Natural killer cell (primary cell): ENCODE measurements at regions of chr6 and their contacts with region 1.

Region 1: DNA sequence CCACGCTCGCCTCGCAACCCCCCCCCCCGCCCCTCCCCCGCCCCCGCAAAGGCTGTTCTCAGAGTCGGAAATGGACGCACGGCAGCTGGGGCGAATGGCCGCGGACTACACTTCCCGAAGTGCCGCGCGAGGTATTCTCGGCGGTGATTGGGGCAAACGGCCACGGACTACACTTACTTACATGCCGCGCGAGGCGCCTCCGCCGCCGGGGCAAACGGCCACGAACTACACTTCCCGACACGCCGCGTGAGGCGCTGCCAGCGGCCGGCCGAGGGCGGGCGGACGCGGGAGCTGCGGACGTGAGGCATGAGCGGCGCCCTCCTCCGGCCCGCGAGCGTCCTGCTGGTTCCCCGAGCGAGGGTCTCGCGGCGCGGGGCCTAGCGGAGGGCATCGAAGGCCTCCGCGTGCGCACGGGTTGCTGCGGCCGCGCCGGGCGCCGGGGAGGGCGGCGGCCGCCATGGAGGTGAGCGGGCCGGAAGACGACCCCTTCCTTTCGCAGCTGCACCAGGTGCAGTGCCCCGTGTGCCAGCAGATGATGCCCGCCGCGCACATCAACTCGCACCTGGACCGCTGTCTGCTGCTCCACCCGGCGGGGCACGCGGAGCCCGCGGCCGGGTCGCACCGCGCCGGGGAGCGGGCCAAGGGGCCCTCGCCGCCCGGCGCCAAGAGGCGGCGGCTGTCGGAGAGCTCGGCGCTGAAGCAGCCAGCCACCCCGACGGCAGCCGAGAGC is at the start of gene WRNIP1:
- DNase-seq: peak; percentile 94 to 98
- ATAC-seq: peak; percentile 85 to 96 (median 90)
- H3K4me3 ChIP-seq: peak within 1 kb of the TSS; percentile 85
- H3K4me3 Mint-ChIP-seq: peak within 1 kb of the TSS; percentile 94
- H3K27ac ChIP-seq: peak within 1 kb of the TSS; percentile 100
- H3K27ac Mint-ChIP-seq: peak within 1 kb of the TSS; percentile 96 to 98
- H3K4me1 ChIP-seq: peaks cover 25% of the 10 kb centered on the region
- H3K4me1 Mint-ChIP-seq: peaks cover 43 to 48% of the 10 kb centered on the region in 2 donors
- H3K27me3 ChIP-seq: no peaks in the 10 kb centered on the region
- H3K27me3 Mint-ChIP-seq: no peaks in the 10 kb centered on the region
- CTCF ChIP-seq: peak; percentile 50
- total RNA-seq, gene WRNIP1: 27.9 to 34.8 (median 30.5) TPM

Region 2: DNA sequence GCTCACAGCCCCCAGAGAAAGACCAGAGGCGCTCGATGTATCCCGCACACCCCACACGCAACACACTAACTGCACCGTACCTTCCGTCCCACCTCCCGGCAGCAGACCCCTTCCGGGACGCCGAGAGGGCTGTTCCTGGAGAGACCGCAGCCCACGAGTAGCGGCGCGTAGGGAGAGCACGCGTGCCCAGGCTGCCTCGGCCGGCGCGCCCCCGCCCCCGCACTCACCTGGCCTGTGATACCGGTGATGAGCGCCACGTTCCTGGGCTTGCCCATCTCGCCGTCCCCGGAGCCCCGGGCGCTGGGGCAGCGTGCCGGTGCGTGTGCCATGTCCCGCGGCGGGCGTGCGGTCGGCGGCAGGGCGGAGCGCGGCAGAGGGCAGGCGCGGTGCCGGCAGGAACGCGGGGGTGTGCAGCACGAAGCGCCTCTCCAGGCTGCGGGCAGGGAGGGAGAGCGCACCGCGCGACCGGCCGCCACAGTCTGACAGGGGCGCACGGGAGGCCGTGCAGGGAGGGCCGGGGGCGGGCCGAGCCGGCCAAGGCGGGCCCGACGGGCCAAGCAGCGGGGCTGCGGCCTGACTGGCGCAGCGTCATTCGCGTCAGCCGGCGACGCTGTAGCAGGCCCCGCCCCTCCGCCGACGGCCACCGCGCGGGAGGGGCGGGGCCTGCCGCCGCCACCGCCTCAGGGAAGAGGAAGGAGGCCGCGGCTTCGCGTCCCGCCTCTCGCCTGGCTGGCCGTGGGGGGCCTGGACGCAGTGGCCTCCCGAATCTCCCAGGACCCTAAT is 520.0 kb before region 1 on chr6 and contains the start of gene GMDS:
- intact Hi-C with region 1: loop called (anchors 10 kb)
- DNase-seq: peak; percentile 84 to 94
- ATAC-seq: peak; percentile 95 to 99 (median 97)
- H3K4me3 ChIP-seq: peak within 1 kb of the TSS; percentile 94
- H3K4me3 Mint-ChIP-seq: peak within 1 kb of the TSS; percentile 91
- H3K27ac ChIP-seq: peak within 1 kb of the TSS; percentile 93
- H3K27ac Mint-ChIP-seq: peak within 1 kb of the TSS; percentile 89 to 91
- H3K4me1 ChIP-seq: peaks cover 22% of the 10 kb centered on the region
- H3K4me1 Mint-ChIP-seq: peaks cover 43 to 52% of the 10 kb centered on the region in 2 donors
- H3K27me3 ChIP-seq: no peaks in the 10 kb centered on the region
- H3K27me3 Mint-ChIP-seq: no peaks in the 10 kb centered on the region
- CTCF ChIP-seq: no peak
- total RNA-seq, gene GMDS: 23.6 to 31.0 (median 26.4) TPM

Region 3: DNA sequence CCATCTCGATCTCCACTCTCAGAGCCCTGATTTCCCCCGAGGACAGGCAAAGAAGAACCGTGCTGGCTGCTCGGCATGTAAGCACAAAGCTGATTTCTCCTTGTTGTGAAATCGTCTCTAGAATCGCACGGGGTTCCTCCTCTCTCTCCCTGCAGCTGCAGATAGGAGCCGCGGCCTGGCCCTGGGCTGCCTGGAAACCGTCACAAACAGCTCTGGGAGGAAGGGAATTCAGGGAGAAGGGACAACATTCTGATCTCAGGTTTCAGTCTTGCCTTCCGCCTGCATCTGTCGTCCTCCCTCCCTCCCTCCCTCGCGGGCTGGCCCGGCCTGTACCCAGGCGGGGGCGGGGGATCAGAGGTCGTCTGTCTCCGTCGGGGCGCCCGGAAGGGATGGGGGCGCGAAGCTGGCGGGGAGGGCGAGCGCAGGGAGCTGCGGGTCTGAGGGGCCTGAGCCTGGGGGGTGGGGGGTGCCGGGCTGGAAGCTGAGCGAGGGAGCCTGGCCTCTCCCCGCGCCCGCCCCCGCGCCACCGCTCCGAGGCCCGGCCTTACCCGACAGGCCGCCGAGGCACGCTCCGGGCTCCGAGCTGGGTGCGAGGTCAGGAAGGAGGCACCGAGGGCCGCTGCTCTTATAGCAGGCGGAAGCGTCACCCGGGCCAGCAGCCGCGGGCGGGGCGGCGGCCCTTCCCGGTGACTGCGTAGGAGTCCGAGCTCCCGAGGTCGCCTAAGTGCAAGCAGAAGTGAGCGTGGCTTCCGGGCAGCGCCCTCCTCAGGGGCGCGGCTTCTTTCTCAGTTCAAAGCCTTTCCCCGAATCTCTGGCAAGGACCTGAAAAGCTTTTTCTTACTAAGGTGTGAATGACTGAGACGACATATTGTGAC is 76.2 kb after region 1 on chr6 and contains the start of gene SERPINB1:
- intact Hi-C with region 1: loop called (anchors 2 kb)
- DNase-seq: peak; percentile 72 to 83
- ATAC-seq: peak; percentile 81 to 90 (median 84)
- H3K4me3 ChIP-seq: peak within 1 kb of the TSS; percentile 64
- H3K4me3 Mint-ChIP-seq: peak within 1 kb of the TSS; percentile 94
- H3K27ac ChIP-seq: peak within 1 kb of the TSS; percentile 78
- H3K27ac Mint-ChIP-seq: peak within 1 kb of the TSS; percentile 90 to 94
- H3K4me1 ChIP-seq: peaks cover 38% of the 10 kb centered on the region
- H3K4me1 Mint-ChIP-seq: peaks cover 57 to 58% of the 10 kb centered on the region in 2 donors
- H3K27me3 ChIP-seq: no peaks in the 10 kb centered on the region
- H3K27me3 Mint-ChIP-seq: no peaks in the 10 kb centered on the region
- CTCF ChIP-seq: no peak
- total RNA-seq, gene SERPINB1: 74.8 to 80.2 (median 78.1) TPM

Region 4: GRCh38 chr6:2911171-2911570 is 145.8 kb after region 1 on chr6:
- intact Hi-C with region 1: no loop called
- DNase-seq: no peak
- ATAC-seq: peak in 1 of 3 donors; percentile 47
- H3K4me3 ChIP-seq: no peak overlapping the region
- H3K4me3 Mint-ChIP-seq: no peak overlapping the region
- H3K27ac ChIP-seq: no peak overlapping the region
- H3K27ac Mint-ChIP-seq: no peak overlapping the region
- H3K4me1 ChIP-seq: peaks cover 18% of the 10 kb centered on the region
- H3K4me1 Mint-ChIP-seq: peaks cover 22 to 39% of the 10 kb centered on the region in 2 donors
- H3K27me3 ChIP-seq: no peaks in the 10 kb centered on the region
- H3K27me3 Mint-ChIP-seq: no peaks in the 10 kb centered on the region
- CTCF ChIP-seq: no peak

Region 5: DNA sequence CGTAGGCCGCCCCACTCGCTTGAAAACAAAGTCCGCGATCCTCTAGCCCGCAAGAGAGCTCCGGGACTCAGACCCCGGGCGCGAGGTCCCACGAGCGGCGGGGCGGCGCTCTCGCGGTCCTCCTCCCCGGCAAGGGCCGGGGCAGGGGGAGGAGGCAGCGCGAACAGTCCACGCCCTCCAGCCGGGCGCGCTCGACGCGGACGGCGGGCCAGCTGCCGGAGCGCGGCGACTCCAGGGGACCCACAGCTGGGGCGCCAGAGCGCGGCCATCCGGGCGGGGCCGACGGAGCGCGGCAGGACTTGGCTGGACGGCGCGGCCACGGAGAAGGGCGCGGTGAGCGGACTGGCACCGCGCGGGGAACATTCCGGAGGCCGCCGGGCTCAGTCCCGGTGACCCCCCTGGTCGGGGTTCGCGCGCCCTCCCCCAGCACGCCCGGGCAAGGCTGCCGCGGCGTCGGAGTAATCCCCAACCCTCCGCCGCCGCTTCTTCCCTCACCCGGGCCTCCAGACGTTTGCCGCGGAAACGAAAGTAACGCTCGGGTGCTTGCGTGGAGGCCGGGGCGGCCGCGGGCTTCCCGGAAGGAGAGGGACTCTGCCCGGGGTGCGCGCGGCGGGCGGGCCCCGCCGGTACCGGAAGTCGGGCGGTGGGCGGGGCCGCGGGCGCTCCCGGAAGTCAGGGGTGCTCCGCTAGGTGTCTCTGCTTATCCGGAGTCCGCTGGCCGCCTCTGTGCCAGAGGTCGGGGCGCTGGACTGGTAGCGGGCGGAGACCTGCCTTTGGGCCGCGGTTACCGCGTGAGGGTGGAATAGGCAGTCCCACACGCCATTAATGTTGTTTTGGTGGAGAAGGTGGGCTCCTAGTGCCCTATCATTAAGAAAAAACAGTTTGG is 303.2 kb after region 1 on chr6 and contains the start of gene RIPK1:
- intact Hi-C with region 1: loop called (anchors 2 kb)
- DNase-seq: peak; percentile 95 to 96
- ATAC-seq: peak; percentile 78 to 93 (median 83)
- H3K4me3 ChIP-seq: peak within 1 kb of the TSS; percentile 67
- H3K4me3 Mint-ChIP-seq: peak within 1 kb of the TSS; percentile 95
- H3K27ac ChIP-seq: peak within 1 kb of the TSS; percentile 96
- H3K27ac Mint-ChIP-seq: peak within 1 kb of the TSS; percentile 91 to 94
- H3K4me1 ChIP-seq: peaks cover 33% of the 10 kb centered on the region
- H3K4me1 Mint-ChIP-seq: peaks cover 44 to 50% of the 10 kb centered on the region in 2 donors
- H3K27me3 ChIP-seq: no peaks in the 10 kb centered on the region
- H3K27me3 Mint-ChIP-seq: no peaks in the 10 kb centered on the region
- CTCF ChIP-seq: peak; percentile 15
- total RNA-seq, gene RIPK1: 30.9 to 44.8 (median 34.5) TPM